ENCODE measurements at regions of chr9 and their contacts with region 1.

Region 1: DNA sequence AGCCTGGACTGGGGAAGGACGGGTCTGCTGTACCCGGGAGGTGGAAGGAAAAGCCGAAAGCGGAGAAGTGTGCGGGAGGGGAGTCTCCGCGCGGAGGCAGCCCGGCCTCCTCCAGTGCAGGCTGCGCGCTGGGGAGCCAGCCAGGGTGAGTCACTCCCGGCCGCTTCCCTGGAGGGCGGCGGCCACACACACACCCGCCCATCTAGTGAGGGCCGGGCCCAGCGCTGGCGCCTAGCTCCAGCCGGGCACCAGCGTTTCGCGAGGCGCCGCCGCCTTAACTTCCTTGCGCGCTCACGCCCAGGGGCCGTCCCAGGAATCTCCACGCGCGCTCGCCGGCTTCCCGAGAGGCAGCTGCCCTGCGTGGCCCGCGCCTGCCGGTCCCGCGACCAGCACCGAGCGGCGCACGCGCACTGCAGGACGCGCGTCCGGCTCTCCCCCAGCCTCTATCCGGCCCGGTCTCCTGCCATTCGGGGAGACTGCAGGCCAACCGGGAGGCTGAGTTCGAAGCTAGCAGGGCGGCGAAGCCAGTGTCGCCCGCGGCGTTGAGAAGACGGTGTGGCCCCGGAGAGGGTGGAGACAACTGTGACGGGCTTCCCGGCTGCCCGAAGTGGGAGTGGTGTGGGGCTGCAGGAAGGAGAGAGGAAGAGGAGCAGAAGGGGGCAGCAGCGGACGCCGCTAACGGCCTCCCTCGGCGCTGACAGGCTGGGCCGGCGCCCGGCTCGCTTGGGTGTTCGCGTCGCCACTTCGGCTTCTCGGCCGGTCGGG is at the start of gene JAK2:
- DNase-seq: peak; percentile 73 to 88 (median 76)
- ATAC-seq: peak; percentile 93
- H3K4me3 ChIP-seq: peak within 1 kb of the TSS; percentile 74
- H3K27ac ChIP-seq: peak within 1 kb of the TSS; percentile 90
- H3K4me1 ChIP-seq: peaks cover 14 to 29% of the 10 kb centered on the region in 2 experiments; a peak in 4 of 5 replicates
- H3K27me3 ChIP-seq: no peaks in the 10 kb centered on the region
- CTCF ChIP-seq: peak; percentile 46 to 51 (median 47); a peak in 4 of 6 replicates
- EP300 ChIP-seq: no peak
- POLR2A ChIP-seq: peak; percentile 85
- RAD21 ChIP-seq: peak in 1 of 2 experiments; percentile 6; a peak in 1 of 4 replicates
- polyA plus RNA-seq, gene JAK2: 4.7 to 5.1 TPM

Region 2: GRCh38 chr9:4630836-4631235 is 354.0 kb before region 1 on chr9:
- CTCF ChIA-PET with region 1: no interaction called
- POLR2A ChIA-PET with region 1: no interaction called
- in situ Hi-C with region 1: no loop called
- intact Hi-C with region 1: no loop called
- DNase-seq: no peak
- ATAC-seq: no peak
- H3K4me3 ChIP-seq: no peak overlapping the region
- H3K27ac ChIP-seq: no peak overlapping the region
- H3K4me1 ChIP-seq: no peaks in the 10 kb centered on the region
- H3K27me3 ChIP-seq: peaks cover 0 to 5% of the 10 kb centered on the region in 2 experiments; a peak in 1 of 5 replicates
- CTCF ChIP-seq: no peak
- EP300 ChIP-seq: no peak
- POLR2A ChIP-seq: no peak
- RAD21 ChIP-seq: no peak

Region 3: GRCh38 chr9:4662108-4662988 is 322.5 kb before region 1 on chr9 and contains the start of gene PLPP6:
- CTCF ChIA-PET with region 1: no interaction called
- POLR2A ChIA-PET with region 1: no interaction called
- in situ Hi-C with region 1: no loop called
- intact Hi-C with region 1: loop called (anchors 5 kb)
- DNase-seq: peak; percentile 75 to 86 (median 80)
- ATAC-seq: peak; percentile 98
- H3K4me3 ChIP-seq: peak within 1 kb of the TSS; percentile 86
- H3K27ac ChIP-seq: peak within 1 kb of the TSS; percentile 69
- H3K4me1 ChIP-seq: peaks cover 10 to 19% of the 10 kb centered on the region in 2 experiments; a peak in 4 of 5 replicates
- H3K27me3 ChIP-seq: no peaks in the 10 kb centered on the region
- CTCF ChIP-seq: peak; percentile 53 to 75 (median 73)
- EP300 ChIP-seq: no peak
- POLR2A ChIP-seq: peak; percentile 71
- RAD21 ChIP-seq: peak; percentile 41 to 75
- polyA plus RNA-seq, gene PLPP6: 1.9 to 2.0 TPM

Region 4: DNA sequence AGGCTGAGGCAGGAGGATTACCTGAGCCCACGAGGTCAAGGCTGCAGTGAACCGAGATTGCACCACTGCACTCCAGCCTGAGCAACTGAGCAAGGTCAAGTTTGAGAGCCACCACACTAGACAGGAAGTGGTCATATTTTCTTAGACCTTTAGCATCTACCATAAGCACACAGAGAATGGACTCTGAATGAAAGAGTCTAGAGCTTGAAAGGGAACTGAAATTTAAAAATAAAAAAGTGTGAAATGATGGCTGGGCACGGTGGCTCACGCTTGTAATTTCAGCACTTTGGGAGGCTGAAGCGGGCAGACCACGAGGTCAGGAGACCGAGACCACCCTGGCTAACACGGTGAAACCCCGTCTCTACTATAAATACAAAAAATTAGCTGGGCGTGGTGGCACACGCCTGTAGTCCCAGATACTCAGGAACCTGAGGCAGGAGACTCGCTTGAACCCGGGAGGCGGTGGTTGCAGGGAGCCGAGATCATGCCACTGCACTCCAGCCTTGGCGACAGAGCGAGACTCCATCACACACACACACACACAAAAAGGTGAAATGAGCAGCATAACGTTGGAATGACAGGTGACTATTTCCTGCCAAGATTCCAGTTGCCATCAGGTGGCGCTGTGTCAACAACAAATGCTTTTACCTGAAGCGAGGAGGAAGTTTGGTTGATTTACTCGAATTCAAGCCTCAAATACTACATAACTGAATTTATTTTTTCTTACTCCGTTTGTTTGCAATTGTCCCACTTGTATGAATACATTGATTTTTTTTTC is 222.5 kb before region 1 on chr9:
- CTCF ChIA-PET with region 1: interaction called, 5 read pairs
- POLR2A ChIA-PET with region 1: no interaction called
- in situ Hi-C with region 1: loop called (anchors 10 kb)
- intact Hi-C with region 1: loop called (anchors 1 kb)
- DNase-seq: peak; percentile 25 to 86 (median 38)
- ATAC-seq: peak; percentile 75
- H3K4me3 ChIP-seq: peak overlapping the region; percentile 7; the same call in 1 of the 2 replicates
- H3K27ac ChIP-seq: peak overlapping the region; percentile 62
- H3K4me1 ChIP-seq: peaks cover 8 to 12% of the 10 kb centered on the region in 2 experiments; a peak in 4 of 5 replicates
- H3K27me3 ChIP-seq: no peaks in the 10 kb centered on the region
- CTCF ChIP-seq: peak; percentile 71 to 83 (median 76)
- EP300 ChIP-seq: no peak
- POLR2A ChIP-seq: no peak
- RAD21 ChIP-seq: peak; percentile 82 to 92

Region 5: GRCh38 chr9:4849364-4849763 is 135.4 kb before region 1 on chr9:
- CTCF ChIA-PET with region 1: no interaction called
- POLR2A ChIA-PET with region 1: interaction called, 8 read pairs
- in situ Hi-C with region 1: no loop called
- intact Hi-C with region 1: loop called (anchors 2 kb)
- DNase-seq: no peak
- ATAC-seq: peak; percentile 11; the same call in 1 of the 3 replicates
- H3K4me3 ChIP-seq: no peak overlapping the region
- H3K27ac ChIP-seq: peak overlapping the region; percentile 59; the same call in 2 of the 3 replicates
- H3K4me1 ChIP-seq: peaks cover 36 to 56% of the 10 kb centered on the region in 2 experiments
- H3K27me3 ChIP-seq: no peaks in the 10 kb centered on the region
- CTCF ChIP-seq: peak in 2 of 3 experiments; percentile 22 to 44; a peak in 1 of 6 replicates
- EP300 ChIP-seq: no peak
- POLR2A ChIP-seq: no peak
- RAD21 ChIP-seq: peak in 1 of 2 experiments; percentile 54; a peak in 3 of 4 replicates

Region 6: GRCh38 chr9:4923580-4924544 is 60.9 kb before region 1 on chr9:
- CTCF ChIA-PET with region 1: interaction called, 3 read pairs
- POLR2A ChIA-PET with region 1: interaction called, 4 read pairs
- in situ Hi-C with region 1: no loop called
- intact Hi-C with region 1: loop called (anchors 2 kb)
- DNase-seq: peak; percentile 19 to 79 (median 47)
- ATAC-seq: peak; percentile 82
- H3K4me3 ChIP-seq: no peak overlapping the region
- H3K27ac ChIP-seq: peak overlapping the region; percentile 65
- H3K4me1 ChIP-seq: peaks cover 8 to 43% of the 10 kb centered on the region in 2 experiments
- H3K27me3 ChIP-seq: no peaks in the 10 kb centered on the region
- CTCF ChIP-seq: peak; percentile 59 to 95 (median 94)
- EP300 ChIP-seq: peak; percentile 52; the same call in 1 of the 2 replicates
- POLR2A ChIP-seq: no peak
- RAD21 ChIP-seq: peak; percentile 76 to 87

Measured in K562 (cell line).